ENCODE measurements at regions of chr6 and their contacts with region 1.

Region 1: DNA sequence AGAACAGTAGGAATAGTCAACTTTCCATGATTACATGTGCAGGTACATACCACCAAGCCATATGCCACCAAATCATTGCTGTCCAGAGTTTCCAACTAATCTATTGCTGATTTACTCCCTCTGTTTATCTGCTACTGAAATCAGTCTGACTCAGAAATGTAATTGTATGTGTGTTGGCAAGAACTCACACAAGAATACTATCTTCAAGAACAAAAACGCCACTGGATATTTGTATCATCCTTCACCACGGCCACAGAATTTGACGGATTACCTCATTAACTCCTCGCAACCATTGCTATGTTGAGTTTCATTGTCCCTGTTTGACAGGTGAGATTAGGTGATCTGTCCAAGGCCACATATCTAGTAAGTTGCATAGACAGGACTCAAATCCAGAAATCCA is 159.2 kb downstream of the GMPR start:
- DNase-seq: no peak
- ATAC-seq: no peak
- H3K4me3 ChIP-seq: no peak overlapping the region
- H3K27ac ChIP-seq: no peak overlapping the region
- H3K4me1 ChIP-seq: no peaks in the 10 kb centered on the region
- H3K27me3 ChIP-seq: no peaks in the 10 kb centered on the region
- CTCF ChIP-seq: no peak
- EP300 ChIP-seq: no peak
- POLR2A ChIP-seq: no peak
- RAD21 ChIP-seq: no peak

Region 2: GRCh38 chr6:16372029-16372776 is 25.4 kb before region 1 on chr6:
- CTCF ChIA-PET with region 1: interaction called, 4 read pairs
- POLR2A ChIA-PET with region 1: interaction called, 3 read pairs
- RAD21 ChIA-PET with region 1: interaction called, 3 read pairs
- SMC1A ChIA-PET with region 1: interaction called, 18 read pairs
- in situ Hi-C with region 1: no loop called
- intact Hi-C with region 1: no loop called
- DNase-seq: no peak
- ATAC-seq: no peak
- H3K4me3 ChIP-seq: no peak overlapping the region
- H3K27ac ChIP-seq: no peak overlapping the region
- H3K4me1 ChIP-seq: peaks cover 23% of the 10 kb centered on the region
- H3K27me3 ChIP-seq: no peaks in the 10 kb centered on the region
- CTCF ChIP-seq: no peak
- EP300 ChIP-seq: no peak
- POLR2A ChIP-seq: no peak
- RAD21 ChIP-seq: no peak

Region 3: DNA sequence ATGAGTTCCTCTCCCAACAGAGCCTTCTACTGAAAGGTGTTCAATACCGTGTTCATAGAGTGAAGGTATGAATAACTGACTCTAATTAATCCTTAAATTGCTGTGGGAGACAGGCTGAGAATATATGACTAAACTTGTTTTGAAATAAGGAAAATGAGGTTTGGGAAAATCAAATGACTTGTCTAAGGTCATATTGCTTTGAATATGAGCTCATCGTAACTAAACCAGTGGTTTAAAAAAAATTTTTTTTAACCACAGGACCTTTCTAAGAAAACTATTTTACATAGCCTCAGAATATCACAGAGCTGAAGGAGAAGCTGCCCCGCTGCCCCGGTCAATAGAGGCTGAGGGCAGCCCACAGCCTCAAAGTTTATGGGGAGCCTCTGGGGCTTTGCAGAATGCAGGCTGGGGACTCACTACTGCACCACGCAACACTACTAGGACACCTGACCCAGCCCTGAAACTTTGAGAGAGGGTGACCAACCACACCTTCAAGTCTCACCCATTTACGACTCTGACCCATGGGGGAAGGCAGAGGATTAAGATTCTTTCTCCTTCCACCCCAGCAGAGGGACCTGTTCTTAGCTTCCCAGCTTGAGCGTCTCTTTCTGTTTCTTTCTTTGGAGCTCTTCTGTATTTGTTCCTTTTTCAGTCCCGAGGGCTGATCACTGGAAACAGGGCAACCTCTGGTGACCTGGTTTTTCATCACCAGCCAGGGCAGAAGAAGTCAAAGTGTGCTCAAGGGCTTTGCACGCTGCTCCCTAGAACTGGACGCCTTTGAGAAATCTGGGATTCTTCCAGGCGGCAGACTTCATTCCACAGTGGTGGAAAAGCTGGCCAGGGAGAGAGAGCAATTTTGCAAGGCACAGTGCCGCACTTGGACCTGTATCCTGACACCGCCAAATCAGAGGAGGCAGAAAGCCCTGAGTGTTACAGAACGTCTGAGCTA is 143.5 kb after region 1 on chr6:
- CTCF ChIA-PET with region 1: no interaction called
- POLR2A ChIA-PET with region 1: no interaction called
- RAD21 ChIA-PET with region 1: no interaction called
- SMC1A ChIA-PET with region 1: no interaction called
- in situ Hi-C with region 1: no loop called
- intact Hi-C with region 1: no loop called
- DNase-seq: no peak
- ATAC-seq: peak; percentile 93
- H3K4me3 ChIP-seq: no peak overlapping the region
- H3K27ac ChIP-seq: no peak overlapping the region
- H3K4me1 ChIP-seq: peaks cover 7% of the 10 kb centered on the region
- H3K27me3 ChIP-seq: no peaks in the 10 kb centered on the region
- CTCF ChIP-seq: peak; percentile 9 to 26 (median 13); a peak in 3 of 6 replicates
- EP300 ChIP-seq: peak in 1 of 2 experiments; percentile 44; a peak in 1 of 4 replicates
- POLR2A ChIP-seq: no peak
- RAD21 ChIP-seq: 0 out of 2 replicates have a peak, but pooled peaks have one; percentile 23

Region 4: GRCh38 chr6:16819752-16820151 is 422.1 kb after region 1 on chr6:
- CTCF ChIA-PET with region 1: no interaction called
- POLR2A ChIA-PET with region 1: no interaction called
- RAD21 ChIA-PET with region 1: no interaction called
- SMC1A ChIA-PET with region 1: no interaction called
- in situ Hi-C with region 1: no loop called
- intact Hi-C with region 1: no loop called
- DNase-seq: no peak
- ATAC-seq: peak; percentile 42; the same call in 1 of the 3 replicates
- H3K4me3 ChIP-seq: no peak overlapping the region
- H3K27ac ChIP-seq: no peak overlapping the region
- H3K4me1 ChIP-seq: no peaks in the 10 kb centered on the region
- H3K27me3 ChIP-seq: no peaks in the 10 kb centered on the region
- CTCF ChIP-seq: peak; percentile 10 to 19 (median 13); a peak in 1 of 6 replicates
- EP300 ChIP-seq: no peak
- POLR2A ChIP-seq: no peak
- RAD21 ChIP-seq: no peak